ENCODE measurements at regions of chr16 and their contacts with region 1.

Region 1: GRCh38 chr16:69186642-69187445 is at the start of gene SNTB2:
- DNase-seq: peak; percentile 56 to 89 (median 77)
- ATAC-seq: peak; percentile 76
- H3K4me3 ChIP-seq: peak within 1 kb of the TSS; percentile 81
- H3K4me3 Mint-ChIP-seq: peak within 1 kb of the TSS; percentile 98
- H3K27ac ChIP-seq: peak within 1 kb of the TSS; percentile 46 to 56
- H3K27ac Mint-ChIP-seq: peak within 1 kb of the TSS; percentile 93
- H3K4me1 ChIP-seq: peaks cover 51% of the 10 kb centered on the region
- H3K4me1 Mint-ChIP-seq: peaks cover 45% of the 10 kb centered on the region
- H3K27me3 ChIP-seq: no peaks in the 10 kb centered on the region
- H3K27me3 Mint-ChIP-seq: no peaks in the 10 kb centered on the region
- CTCF ChIP-seq: no peak
- total RNA-seq, gene SNTB2: 10.1 to 11.4 TPM

Region 2: DNA sequence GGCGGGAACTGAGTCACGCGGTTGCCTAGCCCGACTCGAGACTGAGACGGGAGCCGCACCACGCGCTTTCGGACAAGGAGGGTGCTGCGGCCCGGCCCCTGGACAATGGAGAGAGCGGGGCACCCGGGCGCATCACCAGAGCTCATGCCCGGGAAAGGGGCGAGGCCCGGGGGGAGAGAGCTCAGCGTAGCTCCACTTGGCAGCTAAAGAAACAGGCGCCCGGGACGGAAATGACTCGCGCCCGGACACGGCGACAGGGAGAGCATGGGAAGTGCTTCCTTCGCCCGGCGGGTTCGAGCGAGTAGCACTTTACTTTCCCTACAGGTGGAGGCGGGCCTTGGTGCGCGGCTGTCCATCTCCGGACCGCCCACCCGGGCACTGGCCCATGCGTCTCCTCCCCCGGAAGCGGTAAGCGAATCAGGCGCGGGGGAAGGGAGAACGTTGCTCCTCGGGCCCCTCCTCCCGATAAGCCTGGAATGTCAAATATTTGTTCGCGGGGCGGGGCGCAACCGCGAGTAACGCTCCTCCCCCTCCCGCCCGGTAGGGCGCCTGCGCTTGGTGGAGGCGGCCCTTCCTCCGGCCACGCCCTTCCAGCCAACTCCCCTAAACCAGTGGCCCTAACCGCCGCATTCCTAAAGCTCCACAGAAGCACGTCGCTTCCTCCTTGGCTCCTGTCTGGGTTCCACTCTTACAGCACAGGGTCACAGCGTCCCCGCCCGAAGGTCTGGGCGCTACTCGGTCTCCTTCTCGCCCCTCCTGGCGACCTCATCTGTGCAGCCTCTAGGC is 949.4 kb before region 1 on chr16:
- CTCF ChIA-PET with region 1: no interaction called
- POLR2A ChIA-PET with region 1: no interaction called
- intact Hi-C with region 1: loop called in 1 of 2 experiments (anchors 10 kb)
- DNase-seq: peak; percentile 75 to 96 (median 85)
- ATAC-seq: peak; percentile 78
- H3K4me3 ChIP-seq: peak overlapping the region; percentile 66
- H3K4me3 Mint-ChIP-seq: peak overlapping the region; percentile 95
- H3K27ac ChIP-seq: no peak overlapping the region
- H3K27ac Mint-ChIP-seq: peak overlapping the region; percentile 77
- H3K4me1 ChIP-seq: peaks cover 41% of the 10 kb centered on the region
- H3K4me1 Mint-ChIP-seq: peaks cover 35% of the 10 kb centered on the region
- H3K27me3 ChIP-seq: no peaks in the 10 kb centered on the region
- H3K27me3 Mint-ChIP-seq: no peaks in the 10 kb centered on the region
- CTCF ChIP-seq: no peak

Region 3: GRCh38 chr16:68884861-68885720 is 301.8 kb before region 1 on chr16:
- CTCF ChIA-PET with region 1: no interaction called
- POLR2A ChIA-PET with region 1: no interaction called
- intact Hi-C with region 1: no loop called
- DNase-seq: no peak
- ATAC-seq: no peak
- H3K4me3 ChIP-seq: no peak overlapping the region
- H3K4me3 Mint-ChIP-seq: no peak overlapping the region
- H3K27ac ChIP-seq: no peak overlapping the region
- H3K27ac Mint-ChIP-seq: no peak overlapping the region
- H3K4me1 ChIP-seq: no peaks in the 10 kb centered on the region
- H3K4me1 Mint-ChIP-seq: no peaks in the 10 kb centered on the region
- H3K27me3 ChIP-seq: no peaks in the 10 kb centered on the region
- H3K27me3 Mint-ChIP-seq: no peaks in the 10 kb centered on the region
- CTCF ChIP-seq: no peak

Region 4: GRCh38 chr16:69132424-69133252 is 54.2 kb before region 1 on chr16 and contains the starts of genes CHTF8 and UTP4:
- CTCF ChIA-PET with region 1: interaction called, 3 read pairs
- POLR2A ChIA-PET with region 1: interaction called, 14 read pairs
- intact Hi-C with region 1: loop called (anchors 1 kb)
- DNase-seq: peak; percentile 72 to 94 (median 83)
- ATAC-seq: peak; percentile 87
- H3K4me3 ChIP-seq: peak within 1 kb of the TSS; percentile 96
- H3K4me3 Mint-ChIP-seq: peak within 1 kb of the TSS; percentile 96
- H3K27ac ChIP-seq: peak within 1 kb of the TSS; percentile 76 to 79
- H3K27ac Mint-ChIP-seq: peak within 1 kb of the TSS; percentile 95
- H3K4me1 ChIP-seq: peaks cover 22% of the 10 kb centered on the region
- H3K4me1 Mint-ChIP-seq: peaks cover 52% of the 10 kb centered on the region
- H3K27me3 ChIP-seq: no peaks in the 10 kb centered on the region
- H3K27me3 Mint-ChIP-seq: no peaks in the 10 kb centered on the region
- CTCF ChIP-seq: no peak
- total RNA-seq, gene CHTF8: 25.8 to 28.5 TPM
- total RNA-seq, gene UTP4: 40.1 to 40.3 TPM

Region 5: GRCh38 chr16:69166221-69166833 is 20.5 kb before region 1 on chr16:
- CTCF ChIA-PET with region 1: no interaction called
- POLR2A ChIA-PET with region 1: interaction called, 20 read pairs
- intact Hi-C with region 1: no loop called
- DNase-seq: peak in 10 of 14 experiments; percentile 4 to 48 (median 18)
- ATAC-seq: peak; percentile 87
- H3K4me3 ChIP-seq: no peak overlapping the region
- H3K4me3 Mint-ChIP-seq: no peak overlapping the region
- H3K27ac ChIP-seq: no peak overlapping the region
- H3K27ac Mint-ChIP-seq: peak overlapping the region; percentile 50
- H3K4me1 ChIP-seq: peaks cover 14% of the 10 kb centered on the region
- H3K4me1 Mint-ChIP-seq: peaks cover 23% of the 10 kb centered on the region
- H3K27me3 ChIP-seq: no peaks in the 10 kb centered on the region
- H3K27me3 Mint-ChIP-seq: no peaks in the 10 kb centered on the region
- CTCF ChIP-seq: no peak

Region 6: GRCh38 chr16:69209735-69210134 is 22.9 kb after region 1 on chr16:
- CTCF ChIA-PET with region 1: no interaction called
- POLR2A ChIA-PET with region 1: interaction called, 10 read pairs
- intact Hi-C with region 1: no loop called
- DNase-seq: no peak
- ATAC-seq: no peak
- H3K4me3 ChIP-seq: no peak overlapping the region
- H3K4me3 Mint-ChIP-seq: no peak overlapping the region
- H3K27ac ChIP-seq: no peak overlapping the region
- H3K27ac Mint-ChIP-seq: no peak overlapping the region
- H3K4me1 ChIP-seq: no peaks in the 10 kb centered on the region
- H3K4me1 Mint-ChIP-seq: peaks cover 4% of the 10 kb centered on the region
- H3K27me3 ChIP-seq: no peaks in the 10 kb centered on the region
- H3K27me3 Mint-ChIP-seq: no peaks in the 10 kb centered on the region
- CTCF ChIP-seq: no peak

Region 7: DNA sequence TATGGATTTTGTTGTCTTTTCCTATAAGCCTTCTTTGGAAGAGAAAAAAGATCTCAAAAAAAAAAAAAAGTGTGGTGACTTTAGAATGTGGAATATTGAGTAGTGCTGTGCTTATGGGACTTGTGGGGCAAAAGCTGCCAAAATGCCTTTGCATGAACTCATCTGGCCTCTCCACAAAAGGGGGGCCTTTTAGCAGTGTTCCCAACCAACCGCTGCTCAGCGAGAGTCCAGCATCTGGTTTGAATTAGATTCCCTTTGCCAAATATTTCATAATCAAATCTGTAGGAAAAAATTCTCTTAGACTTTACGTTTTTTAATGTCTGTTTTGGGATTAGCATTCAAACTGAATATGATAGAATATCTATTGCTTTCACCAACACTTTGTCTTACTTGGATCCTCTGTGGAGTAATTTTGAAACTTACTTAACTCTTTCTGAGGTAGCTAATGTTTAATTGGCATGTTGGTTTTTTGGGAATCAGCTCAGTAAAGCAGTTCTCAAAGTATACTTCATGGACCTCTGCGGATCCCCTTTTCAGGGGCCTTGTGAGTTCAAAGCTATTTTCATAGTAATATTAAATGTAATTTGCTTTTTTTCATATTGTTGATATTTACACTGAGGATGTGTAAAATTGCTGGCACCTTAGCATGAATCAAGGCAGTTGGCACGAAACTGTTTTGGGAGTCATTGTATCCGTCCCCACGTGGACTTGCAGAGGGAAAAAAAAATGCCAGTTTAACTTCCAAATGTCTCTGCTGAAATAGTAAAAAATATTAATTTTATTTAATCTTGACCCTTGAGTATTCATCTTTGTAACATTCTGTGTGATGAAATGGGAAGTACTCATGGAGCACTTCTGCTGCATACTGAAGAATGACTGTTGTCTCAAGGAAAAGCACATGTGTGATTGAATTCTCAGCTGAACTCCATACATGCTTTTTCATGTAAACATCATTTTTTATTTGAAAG is 89.6 kb after region 1 on chr16:
- CTCF ChIA-PET with region 1: no interaction called
- POLR2A ChIA-PET with region 1: no interaction called
- intact Hi-C with region 1: no loop called
- DNase-seq: no peak
- ATAC-seq: no peak
- H3K4me3 ChIP-seq: no peak overlapping the region
- H3K4me3 Mint-ChIP-seq: no peak overlapping the region
- H3K27ac ChIP-seq: no peak overlapping the region
- H3K27ac Mint-ChIP-seq: no peak overlapping the region
- H3K4me1 ChIP-seq: no peaks in the 10 kb centered on the region
- H3K4me1 Mint-ChIP-seq: no peaks in the 10 kb centered on the region
- H3K27me3 ChIP-seq: no peaks in the 10 kb centered on the region
- H3K27me3 Mint-ChIP-seq: no peaks in the 10 kb centered on the region
- CTCF ChIP-seq: no peak

Region 8: DNA sequence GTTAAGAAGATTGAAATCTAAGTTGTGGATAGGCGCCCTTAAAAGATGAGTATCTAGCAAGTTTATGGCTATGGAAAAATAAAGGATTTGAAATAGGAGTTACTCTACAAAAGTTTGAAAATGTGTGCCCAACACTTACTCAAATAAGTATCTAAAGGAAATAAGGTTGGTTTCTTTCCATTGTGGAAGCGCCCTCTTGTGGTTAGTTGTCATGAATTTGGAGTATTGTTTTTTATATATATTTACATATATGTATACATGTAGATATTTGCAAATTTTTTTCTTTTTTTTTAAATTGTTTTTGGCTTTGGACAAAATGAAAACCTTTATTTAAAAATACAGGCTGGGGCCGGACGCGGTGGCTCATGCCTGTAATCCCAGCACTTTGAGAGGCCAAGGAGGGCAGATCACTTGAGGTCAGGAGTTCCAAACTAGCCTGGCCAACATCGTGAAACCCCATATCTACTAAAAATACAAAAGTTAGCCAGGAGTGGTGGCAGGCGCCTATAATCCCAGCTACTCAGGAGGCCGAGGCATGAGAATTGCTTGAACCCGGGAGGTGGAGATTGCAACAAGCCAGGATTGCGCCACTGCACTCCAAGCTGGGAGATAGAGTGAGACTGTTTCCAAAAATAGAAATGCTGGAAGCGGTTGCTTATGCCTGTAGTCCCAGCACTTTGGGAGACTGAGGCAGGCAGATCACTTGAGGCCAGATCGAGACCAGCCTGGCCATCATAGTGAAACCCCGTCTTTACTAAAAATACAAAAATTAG is 100.3 kb after region 1 on chr16:
- CTCF ChIA-PET with region 1: no interaction called
- POLR2A ChIA-PET with region 1: no interaction called
- intact Hi-C with region 1: loop called in 1 of 2 experiments (anchors 1 kb)
- DNase-seq: peak in 9 of 14 experiments; percentile 10 to 82 (median 42)
- ATAC-seq: peak; percentile 56
- H3K4me3 ChIP-seq: no peak overlapping the region
- H3K4me3 Mint-ChIP-seq: no peak overlapping the region
- H3K27ac ChIP-seq: no peak overlapping the region
- H3K27ac Mint-ChIP-seq: no peak overlapping the region
- H3K4me1 ChIP-seq: no peaks in the 10 kb centered on the region
- H3K4me1 Mint-ChIP-seq: peaks cover 5% of the 10 kb centered on the region
- H3K27me3 ChIP-seq: no peaks in the 10 kb centered on the region
- H3K27me3 Mint-ChIP-seq: no peaks in the 10 kb centered on the region
- CTCF ChIP-seq: peak; percentile 73

Region 9: GRCh38 chr16:69565671-69566239 is 378.9 kb after region 1 on chr16 and contains the start of gene NFAT5:
- CTCF ChIA-PET with region 1: no interaction called
- POLR2A ChIA-PET with region 1: no interaction called
- intact Hi-C with region 1: loop called in 1 of 2 experiments (anchors 5 kb)
- DNase-seq: peak; percentile 71 to 95 (median 88)
- ATAC-seq: peak; percentile 80
- H3K4me3 ChIP-seq: peak within 1 kb of the TSS; percentile 84
- H3K4me3 Mint-ChIP-seq: peak within 1 kb of the TSS; percentile 100
- H3K27ac ChIP-seq: peak within 1 kb of the TSS; percentile 75 to 93
- H3K27ac Mint-ChIP-seq: peak within 1 kb of the TSS; percentile 96
- H3K4me1 ChIP-seq: peaks cover 31% of the 10 kb centered on the region
- H3K4me1 Mint-ChIP-seq: peaks cover 47% of the 10 kb centered on the region
- H3K27me3 ChIP-seq: no peaks in the 10 kb centered on the region
- H3K27me3 Mint-ChIP-seq: no peaks in the 10 kb centered on the region
- CTCF ChIP-seq: no peak
- total RNA-seq, gene NFAT5: 19.5 to 21.2 TPM

Measured in CD4-positive, alpha-beta T cell (primary cell).